ENCODE measurements at regions of chr14 and their contacts with region 1.

Region 1: GRCh38 chr14:105480952-105481801 is 5.5 kb upstream of the CRIP1 start:
- DNase-seq: peak; percentile 92
- ATAC-seq: peak; percentile 60
- H3K4me3 Mint-ChIP-seq: peak overlapping the region; percentile 47
- H3K27ac Mint-ChIP-seq: peak overlapping the region; percentile 95
- H3K4me1 Mint-ChIP-seq: peaks cover 26% of the 10 kb centered on the region
- H3K27me3 Mint-ChIP-seq: peaks cover 23% of the 10 kb centered on the region

Region 2: DNA sequence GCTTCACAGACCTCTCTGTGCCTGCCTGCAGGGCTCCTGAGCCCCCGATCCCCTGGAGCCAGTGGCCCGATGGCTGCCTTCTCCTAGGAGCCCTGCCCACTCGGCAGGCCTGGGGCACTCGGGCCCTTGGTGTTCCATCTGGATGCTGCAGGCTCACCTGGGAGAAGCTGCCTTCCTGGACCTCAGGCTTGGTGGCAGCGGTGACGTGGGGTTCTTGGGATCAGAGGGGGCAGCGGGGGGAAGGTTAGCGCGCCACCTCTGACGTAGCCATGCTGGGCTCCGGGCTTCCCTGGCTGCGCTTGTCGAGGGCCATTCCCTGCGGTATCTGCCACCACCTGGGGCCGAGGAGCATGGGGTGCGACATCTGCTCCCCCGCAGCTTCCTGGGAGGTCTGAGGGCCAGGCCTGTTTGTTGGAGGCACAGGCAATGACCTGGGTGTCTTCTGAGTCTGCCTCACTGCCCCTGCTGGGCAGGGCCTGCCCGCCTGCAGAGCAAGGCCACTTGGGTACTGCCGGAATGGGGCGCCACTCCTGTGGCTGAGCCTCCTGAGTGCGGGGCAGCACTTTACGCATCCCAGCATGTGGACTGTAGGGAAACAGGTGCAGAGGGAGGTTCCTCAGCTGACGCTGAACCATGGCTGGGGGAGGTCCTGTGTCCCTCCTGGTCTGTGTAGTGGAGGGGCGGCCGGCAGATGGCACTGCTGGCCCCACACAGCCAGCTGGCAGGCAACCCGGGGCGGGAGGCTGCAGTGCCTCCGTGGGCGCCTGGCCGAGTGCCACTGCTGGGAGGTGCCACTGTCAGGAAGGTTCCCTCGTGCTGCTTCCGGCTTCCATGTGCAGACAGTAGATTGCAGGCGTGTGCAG is 41.3 kb before region 1 on chr14:
- CTCF ChIA-PET with region 1: no interaction called
- DNase-seq: no peak
- ATAC-seq: no peak
- H3K4me3 Mint-ChIP-seq: no peak overlapping the region
- H3K27ac Mint-ChIP-seq: no peak overlapping the region
- H3K4me1 Mint-ChIP-seq: peaks cover 1% of the 10 kb centered on the region
- H3K27me3 Mint-ChIP-seq: no peaks in the 10 kb centered on the region

Region 3: GRCh38 chr14:105527661-105528581 is 46.7 kb after region 1 on chr14:
- CTCF ChIA-PET with region 1: interaction called, 42 read pairs
- DNase-seq: peak; percentile 85
- ATAC-seq: peak; percentile 70
- H3K4me3 Mint-ChIP-seq: peak overlapping the region; percentile 61
- H3K27ac Mint-ChIP-seq: peak overlapping the region; percentile 52
- H3K4me1 Mint-ChIP-seq: peaks cover 21% of the 10 kb centered on the region
- H3K27me3 Mint-ChIP-seq: peaks cover 24% of the 10 kb centered on the region

Measured in activated CD8-positive, alpha-beta memory T cell treated with anti-CD3 and anti-CD28 coated beads, Interleukin-2, amount 10 ng/mL, durations not matched to agents 7 days and 5 days (primary cell).